Vagina (tissue), 2 donors: ENCODE measurements at regions of chr10 and their contacts with region 1.

Region 1: DNA sequence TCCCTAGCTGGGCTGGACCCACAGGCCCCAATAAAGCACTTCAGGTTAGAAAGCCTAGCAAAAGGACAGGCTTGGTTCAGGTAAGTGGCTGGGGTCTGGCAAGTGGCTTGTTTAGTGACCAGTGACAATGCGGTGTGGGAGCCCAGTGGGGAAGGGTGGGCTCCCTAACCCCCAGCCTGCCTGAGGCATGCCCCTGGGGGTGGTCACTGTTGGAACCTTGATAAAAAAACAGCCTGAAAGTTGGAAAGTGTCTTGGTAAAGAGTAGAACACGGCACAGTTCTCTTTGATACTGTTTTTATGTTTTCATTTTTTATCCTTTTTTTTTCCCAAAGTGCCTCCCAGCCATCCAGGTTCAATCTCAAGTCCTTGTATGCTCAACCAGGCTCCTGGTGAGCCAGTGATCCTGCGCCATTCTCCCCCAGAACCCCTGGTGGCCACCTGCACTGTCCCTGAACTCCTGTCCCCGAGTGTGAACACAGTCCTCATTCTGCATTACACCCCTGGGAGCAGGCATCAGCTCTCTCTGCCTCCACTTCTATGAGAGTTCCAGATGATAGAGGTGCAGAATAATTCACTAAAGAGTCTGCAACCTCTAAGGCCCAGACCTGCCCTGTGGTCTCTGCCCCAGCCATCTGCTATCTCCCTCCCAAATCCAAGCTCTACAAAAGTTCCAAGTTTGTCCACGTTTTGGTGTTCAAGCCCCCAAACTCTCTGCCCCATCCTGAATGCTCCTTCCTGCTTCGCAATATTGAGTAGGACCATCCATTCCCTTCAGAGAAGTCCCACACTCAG is 15.0 kb upstream of the CXCL12 start:
- DNase-seq: peak; percentile 74 to 81
- H3K4me3 ChIP-seq: no peak overlapping the region
- H3K27ac ChIP-seq: no peak overlapping the region
- H3K4me1 ChIP-seq: peaks cover 14% of the 10 kb centered on the region
- H3K27me3 ChIP-seq: no peaks in the 10 kb centered on the region
- CTCF ChIP-seq: no peak
- POLR2A ChIP-seq: no peak

Region 2: DNA sequence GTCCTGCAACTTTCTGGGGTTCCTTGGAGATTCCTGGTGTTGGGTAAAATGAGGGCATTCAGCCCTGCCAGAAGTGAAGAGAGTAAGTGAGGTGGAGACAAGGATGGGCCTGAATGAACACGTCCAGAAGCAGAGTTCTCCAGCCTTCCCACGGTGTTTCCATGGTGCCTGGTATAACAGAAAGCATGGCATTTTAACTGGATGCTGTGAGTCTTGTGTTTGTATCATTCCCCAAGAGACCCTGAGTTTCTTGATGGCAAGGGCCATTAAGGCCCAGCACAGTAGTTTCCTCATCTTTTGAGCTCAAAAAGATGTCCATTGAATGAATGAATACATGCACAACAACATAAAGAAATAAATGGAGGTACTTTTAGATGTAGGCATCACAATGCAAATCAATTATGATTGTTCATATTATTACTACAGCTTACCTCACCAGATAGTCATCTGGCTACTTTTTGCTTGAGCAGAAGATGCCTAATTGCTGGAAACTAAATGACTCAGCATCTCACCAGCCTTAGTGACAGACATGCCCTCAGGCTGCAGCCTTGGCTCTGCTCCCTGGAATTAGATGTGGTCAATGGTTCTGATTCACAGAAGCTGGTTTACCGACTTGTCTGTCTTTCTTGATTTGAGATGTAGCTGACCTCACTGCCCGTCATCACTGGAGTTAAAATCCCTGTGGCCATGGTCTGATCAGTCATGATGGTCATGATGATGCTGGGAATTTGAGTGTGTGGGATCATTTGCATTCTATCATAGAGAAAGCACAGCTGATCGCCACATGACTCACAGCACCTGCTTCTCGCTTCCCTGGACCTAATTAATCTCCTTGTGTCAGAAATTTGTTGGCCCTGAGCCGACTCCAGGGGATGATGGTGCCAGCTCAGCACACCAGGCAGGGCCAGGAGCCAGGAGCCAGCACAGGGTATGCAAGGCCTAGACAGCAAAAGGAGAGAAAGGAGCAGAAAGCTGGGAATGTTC is 98.9 kb before region 1 on chr10:
- intact Hi-C with region 1: no loop called
- DNase-seq: peak in 1 of 2 donors; percentile 77
- H3K4me3 ChIP-seq: no peak overlapping the region
- H3K27ac ChIP-seq: no peak overlapping the region
- H3K4me1 ChIP-seq: peaks cover 17% of the 10 kb centered on the region
- H3K27me3 ChIP-seq: no peaks in the 10 kb centered on the region
- CTCF ChIP-seq: no peak
- POLR2A ChIP-seq: no peak

Region 3: GRCh38 chr10:44857363-44858016 is 457.6 kb after region 1 on chr10:
- intact Hi-C with region 1: loop called (anchors 5 kb)
- DNase-seq: peak in 1 of 2 donors; percentile 76
- H3K4me3 ChIP-seq: no peak overlapping the region
- H3K27ac ChIP-seq: no peak overlapping the region
- H3K4me1 ChIP-seq: peaks cover 9% of the 10 kb centered on the region
- H3K27me3 ChIP-seq: no peaks in the 10 kb centered on the region
- CTCF ChIP-seq: peak; percentile 79 to 93 (median 90)
- POLR2A ChIP-seq: no peak